ENCODE measurements at regions of chr1 and their contacts with region 1.

Region 1: DNA sequence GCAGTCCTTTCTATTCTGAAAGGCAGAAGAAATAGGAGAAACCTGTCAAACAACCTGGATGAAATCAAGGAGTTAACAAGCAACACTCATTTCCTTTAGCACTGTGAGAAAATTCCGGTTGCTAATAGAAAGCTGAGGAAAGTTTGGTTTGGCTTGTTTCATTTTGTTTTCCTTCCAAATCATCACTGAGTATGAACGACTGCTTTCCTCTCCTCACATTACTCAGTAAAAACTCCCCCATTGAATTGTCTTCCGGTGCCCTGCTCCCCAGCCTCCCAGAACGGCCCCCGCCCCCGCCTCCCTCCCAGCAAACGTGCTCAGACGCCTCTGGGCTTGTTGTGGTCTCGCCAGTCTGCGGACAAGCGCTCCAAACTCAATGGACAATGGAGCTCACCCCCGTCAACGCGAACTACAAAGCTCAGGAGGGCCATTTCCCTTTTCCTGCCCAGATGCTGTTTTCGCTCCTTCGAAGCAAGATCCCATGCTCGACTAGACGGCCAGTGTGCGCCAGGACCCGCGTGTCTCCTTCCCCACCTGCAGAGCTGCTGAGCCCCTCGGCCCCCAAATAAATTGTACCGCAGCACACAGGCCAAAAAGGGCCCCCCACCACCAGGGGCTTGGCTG is 747 bp downstream of the STX6 start:
- DNase-seq: peak; percentile 47
- ATAC-seq: peak; percentile 66
- H3K4me3 ChIP-seq: peak overlapping the region; percentile 90 to 94 (median 91)
- H3K27ac ChIP-seq: peak overlapping the region; percentile 77
- H3K4me1 ChIP-seq: peaks cover 43% of the 10 kb centered on the region
- H3K27me3 ChIP-seq: no peaks in the 10 kb centered on the region; a peak in 1 of 5 replicates
- CTCF ChIP-seq: 0 out of 2 replicates have a peak, but pooled peaks have one; percentile 6
- EP300 ChIP-seq: no peak
- POLR2A ChIP-seq: peak in 1 of 2 experiments; percentile 43; a peak in 1 of 4 replicates
- RAD21 ChIP-seq: no peak

Region 2: DNA sequence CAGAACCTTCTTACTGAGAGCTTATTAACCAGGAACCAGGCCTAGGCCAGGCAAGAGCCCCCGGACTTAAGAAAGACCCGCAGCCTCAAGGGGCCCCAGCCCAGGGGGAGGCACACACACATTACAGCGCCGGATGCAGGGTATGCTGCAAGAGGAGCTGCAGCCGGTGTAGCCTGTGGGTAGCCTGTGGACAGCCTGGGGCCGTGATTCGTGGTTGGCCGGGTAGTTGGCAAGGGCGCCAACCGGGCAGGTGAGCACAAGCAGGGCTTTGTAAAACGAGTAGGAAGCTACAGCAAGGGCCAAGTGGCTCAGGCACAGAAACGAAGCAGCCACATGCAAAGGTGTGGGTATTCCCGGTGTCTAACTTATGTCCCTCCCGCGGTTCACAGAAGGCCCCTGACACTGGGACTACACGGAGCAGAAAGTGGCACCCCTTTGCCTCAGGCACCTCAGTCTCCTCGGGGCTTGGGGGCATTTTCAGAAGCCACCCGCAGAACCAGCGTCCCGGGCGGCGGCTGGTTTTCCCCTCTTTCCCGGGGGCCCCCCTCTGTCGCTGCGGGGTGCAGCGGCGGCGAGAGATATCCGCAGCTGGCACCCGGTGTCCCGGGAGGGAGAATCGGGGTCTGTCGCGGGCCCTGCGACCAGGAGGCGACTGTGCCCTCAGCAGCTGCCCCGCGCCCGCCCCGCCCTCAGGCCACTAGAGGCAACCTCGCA is 68.5 kb before region 1 on chr1:
- CTCF ChIA-PET with region 1: no interaction called
- POLR2A ChIA-PET with region 1: no interaction called
- in situ Hi-C with region 1: no loop called
- intact Hi-C with region 1: loop called (anchors 2 kb)
- DNase-seq: no peak
- ATAC-seq: peak; percentile 13
- H3K4me3 ChIP-seq: peak overlapping the region; percentile 54 to 69 (median 58); a peak in 5 of 6 replicates
- H3K27ac ChIP-seq: peak overlapping the region; percentile 71
- H3K4me1 ChIP-seq: peaks cover 16% of the 10 kb centered on the region
- H3K27me3 ChIP-seq: no peaks in the 10 kb centered on the region
- CTCF ChIP-seq: no peak
- EP300 ChIP-seq: no peak
- POLR2A ChIP-seq: no peak
- RAD21 ChIP-seq: no peak

Region 3: DNA sequence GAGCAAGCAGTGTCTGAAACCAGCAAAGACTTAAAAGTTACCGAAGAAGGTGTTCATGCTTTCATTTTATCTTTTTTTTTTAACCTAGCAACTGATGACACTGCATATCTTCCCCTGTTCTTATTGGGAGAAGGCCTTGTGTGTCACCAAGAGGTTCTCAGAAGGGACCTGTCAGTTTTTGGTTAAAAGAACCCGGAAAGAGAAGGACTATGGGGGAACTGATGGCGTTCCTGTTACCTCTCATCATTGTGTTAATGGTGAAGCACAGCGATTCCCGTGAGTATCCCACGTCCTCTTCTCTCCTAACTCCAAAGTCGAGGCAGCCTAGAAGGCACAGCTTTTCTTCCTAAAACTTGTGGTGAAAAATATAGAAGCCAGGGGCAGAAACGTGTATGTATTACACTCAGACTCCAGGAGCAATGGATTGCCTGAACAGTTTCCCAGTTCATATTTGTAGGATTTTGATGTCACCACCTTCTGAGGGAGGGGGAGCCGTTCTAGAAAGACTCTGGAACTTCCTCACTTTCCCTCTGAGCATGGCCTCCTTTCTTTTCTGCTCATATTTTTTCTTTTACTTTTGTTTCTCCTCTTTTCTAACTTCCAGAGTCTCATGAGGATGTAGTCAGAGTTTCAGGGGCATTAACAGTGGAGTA is 12.0 kb after region 1 on chr1 and contains the start of gene MR1:
- CTCF ChIA-PET with region 1: no interaction called
- POLR2A ChIA-PET with region 1: interaction called, 29 read pairs
- in situ Hi-C with region 1: no loop called
- intact Hi-C with region 1: loop called (anchors 2 kb)
- DNase-seq: peak; percentile 78
- ATAC-seq: peak; percentile 90
- H3K4me3 ChIP-seq: peak within 1 kb of the TSS; percentile 59 to 81 (median 66)
- H3K27ac ChIP-seq: peak within 1 kb of the TSS; percentile 27
- H3K4me1 ChIP-seq: peaks cover 40% of the 10 kb centered on the region
- H3K27me3 ChIP-seq: no peaks in the 10 kb centered on the region; a peak in 1 of 5 replicates
- CTCF ChIP-seq: no peak
- EP300 ChIP-seq: no peak
- POLR2A ChIP-seq: no peak
- RAD21 ChIP-seq: no peak
- total RNA-seq, gene MR1: 6.6 and 10.4 TPM in 2 replicates

Region 4: GRCh38 chr1:181044449-181044966 is 22.6 kb after region 1 on chr1:
- CTCF ChIA-PET with region 1: no interaction called
- POLR2A ChIA-PET with region 1: interaction called, 26 read pairs
- in situ Hi-C with region 1: no loop called
- intact Hi-C with region 1: no loop called
- DNase-seq: peak; percentile 82
- ATAC-seq: peak; percentile 96
- H3K4me3 ChIP-seq: peak overlapping the region in 1 of 3 experiments; percentile 40; a peak in 2 of 6 replicates
- H3K27ac ChIP-seq: peak overlapping the region; percentile 57
- H3K4me1 ChIP-seq: peaks cover 51% of the 10 kb centered on the region
- H3K27me3 ChIP-seq: no peaks in the 10 kb centered on the region
- CTCF ChIP-seq: no peak
- EP300 ChIP-seq: peak in 1 of 2 experiments; percentile 67; a peak in 3 of 4 replicates
- POLR2A ChIP-seq: 0 out of 4 replicates have a peak, but pooled peaks of 1 of the 2 experiments have one; percentile 22
- RAD21 ChIP-seq: no peak

Measured in HepG2 (cell line).